Endothelial cell of umbilical vein (primary cell): ENCODE measurements at regions of chr1 and their contacts with region 1.

Region 1: DNA sequence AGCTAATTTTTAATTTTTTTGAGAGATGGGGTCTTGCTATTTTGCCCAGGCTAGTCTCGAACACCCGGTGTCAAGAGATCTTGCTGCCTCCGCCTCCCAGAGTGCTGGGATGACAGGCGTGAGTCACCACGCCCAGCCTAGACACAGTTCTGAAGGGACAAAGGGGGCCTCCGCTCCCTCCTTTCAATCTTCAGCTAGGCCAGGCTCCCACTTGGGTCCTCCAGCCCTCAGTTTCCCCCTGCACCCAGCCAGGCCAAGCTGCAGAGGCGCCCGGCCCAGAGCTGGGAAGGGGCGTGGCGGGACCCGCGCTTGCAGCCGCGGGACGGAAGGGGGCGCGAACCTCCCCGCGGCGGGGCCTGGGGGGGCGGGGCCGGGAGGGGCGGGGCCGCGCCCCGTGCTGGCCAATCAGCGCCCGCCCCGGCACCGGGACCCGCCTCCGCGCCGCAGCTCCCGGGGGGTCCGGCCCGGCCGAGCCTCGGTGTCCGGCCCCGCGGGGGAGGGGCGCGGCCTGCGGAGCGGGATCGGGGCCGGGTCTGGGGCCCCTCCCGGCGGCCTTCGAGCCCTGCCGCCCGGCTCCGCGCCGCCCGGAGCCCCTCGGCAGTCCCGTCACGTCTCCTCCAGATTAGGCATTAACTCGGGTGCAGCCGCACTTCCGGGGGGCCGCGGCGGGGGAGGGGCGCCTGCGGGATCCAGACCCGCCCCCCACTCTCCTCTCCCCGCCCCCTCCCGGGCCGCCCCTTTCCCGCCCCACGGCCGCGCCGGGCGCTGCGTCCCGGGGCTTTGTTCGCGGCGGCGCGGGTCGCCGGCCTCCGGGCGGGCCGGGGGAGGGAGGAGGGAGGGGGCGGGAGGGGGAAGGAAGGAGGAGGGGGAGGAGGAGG is 559 bp upstream of the AGRN start:
- DNase-seq: peak; percentile 64
- H3K4me3 ChIP-seq: peak overlapping the region in 1 of 3 experiments; percentile 38
- H3K27ac ChIP-seq: no peak overlapping the region
- H3K4me1 ChIP-seq: peaks cover 7% of the 10 kb centered on the region
- H3K27me3 ChIP-seq: no peaks in the 10 kb centered on the region
- CTCF ChIP-seq: peak; percentile 21 to 54
- POLR2A ChIP-seq: peak; percentile 10

Region 2: DNA sequence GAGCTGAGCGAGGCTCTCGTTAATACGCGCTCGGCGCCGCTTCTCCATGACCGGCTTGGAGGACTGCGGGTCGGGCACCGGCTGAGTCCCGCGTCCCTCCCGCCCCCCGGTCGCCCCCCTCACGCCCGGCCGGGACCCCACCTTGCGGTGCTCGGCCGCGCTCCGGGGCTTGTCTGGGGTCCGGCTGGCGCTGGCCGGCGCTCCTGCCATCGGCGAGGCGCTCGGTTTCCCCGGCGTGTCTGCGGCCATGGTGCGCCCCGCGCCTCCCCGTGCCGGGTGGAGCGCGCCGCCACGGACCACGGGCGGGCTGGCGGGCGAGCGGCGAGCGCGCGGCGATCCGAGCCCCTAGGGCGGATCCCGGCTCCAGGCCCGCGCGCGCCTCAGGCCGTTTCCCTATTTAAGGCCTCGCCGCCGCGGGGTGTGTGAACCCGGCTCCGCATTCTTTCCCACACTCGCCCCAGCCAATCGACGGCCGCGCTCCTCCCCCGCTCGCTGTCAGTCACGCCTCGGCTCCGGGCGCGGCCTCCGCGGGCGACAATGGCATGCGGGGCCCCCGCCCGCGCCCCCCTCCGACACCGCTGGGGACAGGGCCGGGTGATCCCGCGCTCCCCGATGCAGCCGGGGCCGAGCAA is 19.5 kb before region 1 on chr1 and contains the start of gene HES4:
- CTCF ChIA-PET with region 1: interaction called, 41 read pairs
- POLR2A ChIA-PET with region 1: interaction called, 4 read pairs
- dilution Hi-C with region 1: no loop called
- intact Hi-C with region 1: loop called (anchors 2 kb)
- DNase-seq: peak; percentile 92
- H3K4me3 ChIP-seq: peak within 1 kb of the TSS; percentile 47 to 55 (median 51)
- H3K27ac ChIP-seq: peak within 1 kb of the TSS; percentile 80
- H3K4me1 ChIP-seq: peaks cover 13% of the 10 kb centered on the region
- H3K27me3 ChIP-seq: peaks cover 0 to 19% of the 10 kb centered on the region in 2 experiments
- CTCF ChIP-seq: no peak
- POLR2A ChIP-seq: peak; percentile 69
- total RNA-seq, gene HES4: 32.0 and 37.6 TPM in 2 replicates

Region 3: GRCh38 chr1:1004780-1005697 is 14.3 kb before region 1 on chr1:
- CTCF ChIA-PET with region 1: interaction called, 41 read pairs
- POLR2A ChIA-PET with region 1: interaction called, 4 read pairs
- dilution Hi-C with region 1: no loop called
- intact Hi-C with region 1: loop called (anchors 2 kb)
- DNase-seq: peak; percentile 77
- H3K4me3 ChIP-seq: no peak overlapping the region
- H3K27ac ChIP-seq: no peak overlapping the region
- H3K4me1 ChIP-seq: peaks cover 14% of the 10 kb centered on the region
- H3K27me3 ChIP-seq: no peaks in the 10 kb centered on the region
- CTCF ChIP-seq: no peak
- POLR2A ChIP-seq: no peak

Region 4: GRCh38 chr1:1040004-1040991 is 20.9 kb after region 1 on chr1:
- CTCF ChIA-PET with region 1: interaction called, 7 read pairs
- POLR2A ChIA-PET with region 1: no interaction called
- dilution Hi-C with region 1: no loop called
- intact Hi-C with region 1: loop called (anchors 2 kb)
- DNase-seq: peak; percentile 84
- H3K4me3 ChIP-seq: peak overlapping the region in 1 of 3 experiments; percentile 8
- H3K27ac ChIP-seq: no peak overlapping the region
- H3K4me1 ChIP-seq: peaks cover 7% of the 10 kb centered on the region
- H3K27me3 ChIP-seq: no peaks in the 10 kb centered on the region
- CTCF ChIP-seq: peak in 1 of 2 donors; percentile 27
- POLR2A ChIP-seq: no peak

Region 5: DNA sequence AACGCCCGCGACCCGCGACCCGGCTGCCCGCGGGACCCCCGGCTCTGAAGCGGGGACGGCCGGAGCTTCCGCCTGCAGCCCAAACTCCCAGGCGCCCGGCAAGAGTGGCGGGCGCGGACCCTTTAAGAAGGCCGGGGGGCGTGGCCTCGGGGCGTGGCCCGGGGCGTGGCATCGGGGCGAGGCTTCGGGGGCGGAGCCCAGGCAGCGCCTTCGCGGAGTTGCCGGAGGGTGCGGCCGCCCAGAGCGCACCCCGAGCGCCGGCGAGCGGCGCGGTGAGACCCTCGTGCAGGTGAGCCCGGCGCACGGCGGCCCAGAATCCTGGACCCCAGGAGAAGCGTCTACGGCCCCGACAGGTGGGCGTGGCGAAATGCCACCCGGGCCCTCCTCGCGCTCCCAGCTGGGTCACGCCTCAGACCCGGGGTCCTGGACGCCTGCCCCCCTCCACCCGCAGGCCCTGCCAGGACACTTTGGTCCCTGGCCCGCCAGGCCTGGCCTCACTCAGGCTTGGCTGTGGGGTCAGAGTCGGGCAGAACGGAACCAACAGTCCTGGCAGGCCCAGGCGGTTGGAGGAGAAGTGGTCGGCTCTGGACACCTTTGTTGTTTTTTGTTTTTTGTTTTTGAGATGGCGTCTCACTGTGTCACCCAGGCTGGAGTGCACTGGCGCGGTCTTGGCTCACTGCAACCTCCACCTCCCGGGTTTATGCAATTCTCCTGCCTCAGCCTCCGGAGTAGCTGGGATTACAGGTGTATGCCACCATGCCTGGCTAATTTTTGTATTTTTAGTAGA is 40.3 kb after region 1 on chr1:
- CTCF ChIA-PET with region 1: interaction called, 12 read pairs
- POLR2A ChIA-PET with region 1: no interaction called
- dilution Hi-C with region 1: no loop called
- intact Hi-C with region 1: loop called (anchors 1 kb)
- DNase-seq: peak; percentile 70
- H3K4me3 ChIP-seq: peak overlapping the region; percentile 35 to 51 (median 43)
- H3K27ac ChIP-seq: no peak overlapping the region
- H3K4me1 ChIP-seq: peaks cover 16% of the 10 kb centered on the region
- H3K27me3 ChIP-seq: peaks cover 0 to 10% of the 10 kb centered on the region in 2 experiments
- CTCF ChIP-seq: no peak
- POLR2A ChIP-seq: no peak

Region 6: DNA sequence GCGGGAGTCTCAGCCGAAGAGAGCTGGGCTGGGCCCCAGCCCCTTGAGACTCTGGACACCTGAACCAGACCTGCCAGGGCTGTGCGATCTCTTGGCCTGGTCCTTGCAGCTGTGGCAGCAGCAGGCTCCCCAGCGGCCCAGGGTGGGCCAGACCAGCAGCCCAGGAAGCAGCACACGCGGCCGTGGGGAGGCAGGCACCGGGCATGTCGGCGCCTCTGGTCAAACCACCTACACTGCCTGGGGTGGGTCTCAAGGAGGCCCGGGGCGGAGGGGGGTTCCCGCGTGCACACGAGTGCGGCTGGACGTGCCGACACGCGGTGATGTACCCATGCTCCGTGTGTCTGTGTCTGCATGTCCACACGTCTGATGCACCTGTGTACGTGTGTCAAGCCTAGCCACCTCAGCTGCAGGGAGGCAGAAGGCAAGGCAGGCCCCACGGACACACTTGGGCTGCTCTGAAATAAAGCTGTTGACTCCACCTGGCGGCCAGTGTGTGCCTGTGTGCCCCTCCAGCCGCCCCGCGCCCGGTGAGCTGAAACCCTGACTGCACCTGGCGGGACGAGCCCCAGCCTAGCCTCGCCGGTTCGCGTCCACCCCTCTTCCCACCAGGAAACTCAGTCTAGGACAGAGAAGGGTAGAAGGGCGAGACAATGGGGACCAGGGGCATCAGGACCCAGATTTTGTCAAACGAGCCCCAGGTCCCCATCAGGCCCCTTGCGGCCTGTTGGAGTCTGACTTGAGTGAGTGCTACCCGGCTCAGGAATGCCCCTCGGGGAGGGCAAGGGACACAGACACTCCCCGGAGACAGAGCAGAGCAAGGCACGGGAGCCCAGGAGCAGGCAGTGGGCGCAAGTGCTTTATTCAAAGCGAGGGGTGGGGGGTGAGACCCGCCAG is 272.4 kb after region 1 on chr1:
- CTCF ChIA-PET with region 1: interaction called, 10 read pairs
- POLR2A ChIA-PET with region 1: no interaction called
- dilution Hi-C with region 1: no loop called
- intact Hi-C with region 1: no loop called
- DNase-seq: peak; percentile 50
- H3K4me3 ChIP-seq: no peak overlapping the region
- H3K27ac ChIP-seq: no peak overlapping the region
- H3K4me1 ChIP-seq: no peaks in the 10 kb centered on the region
- H3K27me3 ChIP-seq: no peaks in the 10 kb centered on the region
- CTCF ChIP-seq: peak; percentile 73 to 83
- POLR2A ChIP-seq: no peak